Activated CD4-positive, alpha-beta T cell treated with anti-CD3 and anti-CD28 coated beads for 36 hours (primary cell): ENCODE measurements at regions of chr11 and their contacts with region 1.

Region 1: DNA sequence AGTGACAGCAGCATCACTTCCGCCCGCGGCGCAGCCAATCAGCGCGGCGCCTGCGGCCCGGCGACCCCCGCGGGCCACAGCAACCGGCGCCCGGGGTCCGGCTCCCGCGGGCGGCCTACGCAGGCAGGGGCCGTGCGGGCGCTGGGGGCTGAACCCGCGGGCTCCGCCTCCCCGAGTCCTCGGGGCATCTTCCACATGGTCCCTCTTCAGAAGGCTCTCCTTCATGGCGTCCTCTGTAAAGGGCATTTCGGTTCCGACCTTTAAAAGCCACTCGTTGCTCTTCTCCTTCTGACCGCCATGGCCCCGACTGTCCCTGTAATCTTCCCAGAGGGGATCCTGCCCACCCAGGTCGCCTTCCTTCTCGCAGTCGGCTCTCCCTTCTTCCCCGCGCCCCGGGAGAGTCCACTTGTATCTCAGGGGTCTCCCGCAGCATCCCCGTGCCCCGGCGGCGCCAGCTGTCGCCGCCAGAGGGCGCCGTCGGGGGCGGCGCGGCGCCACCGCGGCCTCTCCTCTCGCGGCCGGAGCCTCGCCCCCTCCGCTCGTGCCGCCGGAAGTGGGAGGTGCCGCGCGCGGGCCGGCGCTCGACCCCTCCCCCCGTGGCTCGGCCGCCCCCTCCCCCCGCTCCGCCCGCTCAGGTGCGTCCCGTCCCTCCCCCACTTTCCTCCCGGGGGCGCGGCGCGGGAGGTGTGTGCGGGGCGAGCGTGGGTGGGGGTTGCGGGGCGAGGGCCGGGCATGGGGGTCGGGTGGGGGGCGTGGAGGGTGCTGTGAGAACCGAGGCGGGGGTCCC is at the start of gene RNF214:
- DNase-seq: peak; percentile 86
- ATAC-seq: peak; percentile 74
- H3K4me3 Mint-ChIP-seq: peak within 1 kb of the TSS; percentile 87
- H3K27ac Mint-ChIP-seq: peak within 1 kb of the TSS; percentile 100
- H3K4me1 Mint-ChIP-seq: peaks cover 34% of the 10 kb centered on the region
- H3K27me3 Mint-ChIP-seq: no peaks in the 10 kb centered on the region
- total RNA-seq, gene RNF214: 19.3 to 24.6 TPM

Region 2: GRCh38 chr11:116787786-116788486 is 444.3 kb before region 1 on chr11 and contains the start of gene ZPR1:
- CTCF ChIA-PET with region 1: interaction called, 12 read pairs
- POLR2A ChIA-PET with region 1: interaction called, 3 read pairs
- intact Hi-C with region 1: loop called in 1 of 2 experiments (anchors 5 kb)
- DNase-seq: peak; percentile 90
- ATAC-seq: peak; percentile 76
- H3K4me3 Mint-ChIP-seq: peak within 1 kb of the TSS; percentile 96
- H3K27ac Mint-ChIP-seq: peak within 1 kb of the TSS; percentile 88
- H3K4me1 Mint-ChIP-seq: peaks cover 52% of the 10 kb centered on the region
- H3K27me3 Mint-ChIP-seq: no peaks in the 10 kb centered on the region
- total RNA-seq, gene ZPR1: 88.8 to 106 TPM

Region 3: GRCh38 chr11:116986521-116987105 is 245.7 kb before region 1 on chr11:
- CTCF ChIA-PET with region 1: no interaction called
- POLR2A ChIA-PET with region 1: no interaction called
- intact Hi-C with region 1: loop called in 1 of 2 experiments (anchors 1 kb)
- DNase-seq: peak; percentile 31
- ATAC-seq: peak; percentile 82
- H3K4me3 Mint-ChIP-seq: peak overlapping the region; percentile 30
- H3K27ac Mint-ChIP-seq: peak overlapping the region; percentile 76
- H3K4me1 Mint-ChIP-seq: peaks cover 71% of the 10 kb centered on the region
- H3K27me3 Mint-ChIP-seq: no peaks in the 10 kb centered on the region

Region 4: GRCh38 chr11:117098269-117099232 is 133.7 kb before region 1 on chr11 and contains the start of gene SIK3:
- CTCF ChIA-PET with region 1: interaction called, 3 read pairs
- POLR2A ChIA-PET with region 1: interaction called, 3 read pairs
- intact Hi-C with region 1: loop called in 1 of 2 experiments (anchors 1 kb)
- DNase-seq: peak; percentile 96
- ATAC-seq: peak; percentile 71
- H3K4me3 Mint-ChIP-seq: peak within 1 kb of the TSS; percentile 93
- H3K27ac Mint-ChIP-seq: peak within 1 kb of the TSS; percentile 93
- H3K4me1 Mint-ChIP-seq: peaks cover 46% of the 10 kb centered on the region
- H3K27me3 Mint-ChIP-seq: no peaks in the 10 kb centered on the region
- total RNA-seq, gene SIK3: 23.6 to 25.3 TPM

Region 5: GRCh38 chr11:117110294-117110950 is 121.9 kb before region 1 on chr11:
- CTCF ChIA-PET with region 1: no interaction called
- POLR2A ChIA-PET with region 1: no interaction called
- intact Hi-C with region 1: no loop called
- DNase-seq: no peak
- ATAC-seq: no peak
- H3K4me3 Mint-ChIP-seq: no peak overlapping the region
- H3K27ac Mint-ChIP-seq: no peak overlapping the region
- H3K4me1 Mint-ChIP-seq: no peaks in the 10 kb centered on the region
- H3K27me3 Mint-ChIP-seq: no peaks in the 10 kb centered on the region

Region 6: GRCh38 chr11:117327567-117328374 is 95.5 kb after region 1 on chr11 and contains the start of gene CEP164:
- CTCF ChIA-PET with region 1: interaction called, 5 read pairs
- POLR2A ChIA-PET with region 1: interaction called, 6 read pairs
- intact Hi-C with region 1: loop called (anchors 1 kb)
- DNase-seq: peak; percentile 96
- ATAC-seq: peak; percentile 97
- H3K4me3 Mint-ChIP-seq: no peak within 1 kb of the TSS
- H3K27ac Mint-ChIP-seq: peak within 1 kb of the TSS; percentile 73
- H3K4me1 Mint-ChIP-seq: peaks cover 13% of the 10 kb centered on the region
- H3K27me3 Mint-ChIP-seq: no peaks in the 10 kb centered on the region
- total RNA-seq, gene CEP164: 30.3 to 31.0 TPM

Region 7: GRCh38 chr11:118002541-118003423 is 770.5 kb after region 1 on chr11:
- CTCF ChIA-PET with region 1: no interaction called
- POLR2A ChIA-PET with region 1: no interaction called
- intact Hi-C with region 1: loop called in 1 of 2 experiments (anchors 5 kb)
- DNase-seq: peak; percentile 85
- ATAC-seq: peak; percentile 67
- H3K4me3 Mint-ChIP-seq: peak overlapping the region; percentile 38
- H3K27ac Mint-ChIP-seq: peak overlapping the region; percentile 97
- H3K4me1 Mint-ChIP-seq: peaks cover 94% of the 10 kb centered on the region
- H3K27me3 Mint-ChIP-seq: no peaks in the 10 kb centered on the region

Region 8: DNA sequence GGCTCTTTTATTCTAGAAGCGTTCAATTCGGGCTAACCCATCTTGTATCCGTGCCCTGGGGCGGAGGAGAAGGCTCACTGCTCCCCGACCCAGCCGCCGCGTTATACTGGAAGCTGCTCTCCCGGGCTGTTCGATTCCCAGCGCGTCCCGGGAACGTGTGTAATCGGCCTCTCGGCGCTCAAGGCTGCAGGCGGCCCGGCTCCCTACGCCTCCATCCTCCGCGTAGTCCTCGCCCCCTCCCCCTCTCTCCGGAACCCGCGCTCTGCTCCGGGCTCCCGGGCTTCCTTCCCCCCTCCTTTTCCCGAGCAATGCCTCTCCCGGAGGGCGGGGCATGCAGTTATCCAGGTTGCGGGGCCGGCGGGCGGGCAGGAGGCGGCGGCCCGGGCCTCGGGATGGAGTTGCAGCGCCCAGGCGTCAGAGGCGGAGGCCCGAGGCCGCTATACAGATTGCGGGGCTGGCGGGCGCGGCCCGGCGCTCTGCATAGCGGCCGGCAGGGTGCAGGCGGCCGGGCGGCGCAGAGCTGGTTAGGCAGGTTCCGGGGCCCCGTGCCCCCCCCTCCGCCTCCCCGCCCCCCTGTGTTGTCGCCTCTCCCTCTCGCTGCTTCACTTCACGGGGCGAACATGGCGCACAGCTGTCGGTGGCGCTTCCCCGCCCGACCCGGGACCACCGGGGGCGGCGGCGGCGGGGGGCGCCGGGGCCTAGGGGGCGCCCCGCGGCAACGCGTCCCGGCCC is 1203.8 kb after region 1 on chr11 and contains the start of gene KMT2A:
- CTCF ChIA-PET with region 1: no interaction called
- POLR2A ChIA-PET with region 1: no interaction called
- intact Hi-C with region 1: loop called in 1 of 2 experiments (anchors 5 kb)
- DNase-seq: peak; percentile 96
- ATAC-seq: peak; percentile 41
- H3K4me3 Mint-ChIP-seq: peak within 1 kb of the TSS; percentile 94
- H3K27ac Mint-ChIP-seq: peak within 1 kb of the TSS; percentile 94
- H3K4me1 Mint-ChIP-seq: peaks cover 37% of the 10 kb centered on the region
- H3K27me3 Mint-ChIP-seq: no peaks in the 10 kb centered on the region
- total RNA-seq, gene KMT2A: 64.1 to 67.1 TPM